Mammary epithelial cell (primary cell): ENCODE measurements at regions of chr16 and their contacts with region 1.

Region 1: GRCh38 chr16:58249780-58250478 is 44.9 kb downstream of the PRSS54 start:
- DNase-seq: peak; percentile 86
- H3K4me3 ChIP-seq: peak overlapping the region; percentile 72 to 95 (median 74)
- H3K27ac ChIP-seq: peak overlapping the region; percentile 73
- H3K4me1 ChIP-seq: peaks cover 5% of the 10 kb centered on the region
- H3K27me3 ChIP-seq: no peaks in the 10 kb centered on the region
- CTCF ChIP-seq: no peak

Region 2: GRCh38 chr16:58198022-58198683 is 51.8 kb before region 1 on chr16 and contains the start of gene CSNK2A2:
- CTCF ChIA-PET with region 1: no interaction called
- dilution Hi-C with region 1: no loop called
- in situ Hi-C with region 1: no loop called
- intact Hi-C with region 1: loop called (anchors 5 kb)
- DNase-seq: peak; percentile 59
- H3K4me3 ChIP-seq: peak within 1 kb of the TSS; percentile 74 to 88 (median 82)
- H3K27ac ChIP-seq: no peak within 1 kb of the TSS
- H3K4me1 ChIP-seq: peaks cover 16% of the 10 kb centered on the region
- H3K27me3 ChIP-seq: no peaks in the 10 kb centered on the region
- CTCF ChIP-seq: peak; percentile 31 to 50
- total RNA-seq, gene CSNK2A2: 29.3 to 79.7 TPM

Region 3: DNA sequence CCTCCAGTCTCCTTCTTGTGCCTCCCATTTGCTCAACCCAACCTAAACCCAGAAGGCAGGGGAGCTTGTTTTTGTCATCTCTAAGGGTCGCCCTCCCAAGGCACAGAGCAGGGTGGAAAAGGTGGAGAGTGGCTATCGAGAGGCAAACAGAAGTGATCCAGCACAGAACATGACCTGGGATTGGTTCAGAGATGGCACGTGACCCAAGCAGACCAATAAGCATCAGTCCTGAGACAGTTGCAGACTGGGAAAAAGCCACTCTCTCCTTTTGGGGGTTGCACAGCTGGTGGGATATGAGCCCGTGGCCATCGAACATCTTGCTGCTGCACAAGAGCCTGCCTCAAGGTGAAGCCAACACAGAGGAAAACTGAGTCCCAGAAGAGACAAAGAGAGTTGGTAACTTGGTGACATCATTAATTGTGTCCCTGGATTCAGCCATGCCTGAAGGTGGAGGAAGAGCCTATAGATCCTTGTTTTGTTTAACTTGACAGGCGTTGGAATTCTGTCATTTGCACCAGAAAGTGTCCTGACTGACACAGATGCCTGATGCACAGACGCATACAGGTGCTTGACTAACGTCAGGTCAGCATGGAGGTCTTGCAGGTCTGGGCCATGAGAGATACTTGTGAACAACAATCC is 23.8 kb before region 1 on chr16:
- CTCF ChIA-PET with region 1: no interaction called
- dilution Hi-C with region 1: no loop called
- in situ Hi-C with region 1: no loop called
- intact Hi-C with region 1: loop called (anchors 2 kb)
- DNase-seq: no peak
- H3K4me3 ChIP-seq: no peak overlapping the region
- H3K27ac ChIP-seq: no peak overlapping the region
- H3K4me1 ChIP-seq: peaks cover 7% of the 10 kb centered on the region
- H3K27me3 ChIP-seq: no peaks in the 10 kb centered on the region
- CTCF ChIP-seq: no peak

Region 4: DNA sequence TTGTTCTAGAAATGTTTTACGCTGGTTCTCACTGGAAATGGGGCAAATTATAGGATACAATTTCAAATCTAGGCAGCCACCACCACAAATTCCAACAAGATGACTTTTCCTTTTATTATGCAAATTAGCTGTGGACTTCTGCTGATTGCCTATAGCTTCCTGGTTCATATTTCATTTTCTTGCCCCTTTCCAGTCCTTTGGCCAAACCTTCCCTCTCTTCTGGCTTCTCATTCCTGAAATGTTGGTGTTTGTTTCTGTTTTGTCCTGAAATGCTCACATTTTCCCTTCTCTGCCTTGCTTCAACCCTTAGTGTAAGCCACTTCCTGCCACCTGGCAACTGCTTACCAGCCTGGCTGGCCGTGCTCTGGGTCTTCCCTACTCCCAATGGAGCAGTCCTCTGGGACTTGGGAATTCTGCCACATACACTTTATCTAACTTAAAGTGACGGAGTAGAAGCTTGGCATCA is 30.9 kb after region 1 on chr16:
- CTCF ChIA-PET with region 1: no interaction called
- dilution Hi-C with region 1: no loop called
- in situ Hi-C with region 1: no loop called
- intact Hi-C with region 1: loop called (anchors 2 kb)
- DNase-seq: peak; percentile 55
- H3K4me3 ChIP-seq: peak overlapping the region in 1 of 3 experiments; percentile 11
- H3K27ac ChIP-seq: peak overlapping the region; percentile 85
- H3K4me1 ChIP-seq: peaks cover 19% of the 10 kb centered on the region
- H3K27me3 ChIP-seq: no peaks in the 10 kb centered on the region
- CTCF ChIP-seq: no peak

Region 5: DNA sequence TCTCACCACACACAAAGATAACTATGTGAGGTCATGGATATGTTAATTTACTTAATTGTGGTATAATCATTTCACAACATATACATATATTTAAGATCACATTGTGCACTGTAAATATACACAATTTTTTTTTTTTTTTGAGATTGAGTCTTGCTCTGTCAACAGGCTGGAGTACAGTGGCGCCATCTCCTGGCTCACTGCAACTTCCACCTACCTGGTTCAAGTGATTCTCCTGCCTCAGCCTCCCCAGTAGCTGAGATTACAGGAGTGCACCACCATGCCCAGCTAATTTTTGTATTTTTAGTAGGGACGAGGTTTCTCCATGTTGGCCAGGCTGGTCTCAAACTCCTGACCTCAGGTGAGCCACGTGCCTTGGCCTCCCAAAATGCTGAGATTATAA is 56.4 kb after region 1 on chr16:
- CTCF ChIA-PET with region 1: no interaction called
- dilution Hi-C with region 1: no loop called
- in situ Hi-C with region 1: no loop called
- intact Hi-C with region 1: loop called (anchors 1 kb)
- DNase-seq: peak; percentile 21
- H3K4me3 ChIP-seq: no peak overlapping the region
- H3K27ac ChIP-seq: no peak overlapping the region
- H3K4me1 ChIP-seq: no peaks in the 10 kb centered on the region
- H3K27me3 ChIP-seq: no peaks in the 10 kb centered on the region
- CTCF ChIP-seq: peak; percentile 46 to 69